OCI-LY7 (cell line): ENCODE measurements at regions of chr19 and their contacts with region 1.

Region 1: GRCh38 chr19:20039203-20039723 is at the start of gene ZNF682:
- DNase-seq: peak; percentile 98
- H3K4me3 ChIP-seq: peak within 1 kb of the TSS; percentile 73
- H3K27ac ChIP-seq: peak within 1 kb of the TSS; percentile 59
- H3K4me1 ChIP-seq: peaks cover 11% of the 10 kb centered on the region
- CTCF ChIP-seq: no peak
- total RNA-seq, gene ZNF682: 9.1 and 10.5 TPM in 2 replicates

Region 2: GRCh38 chr19:19643158-19644053 is 395.9 kb before region 1 on chr19 and contains the start of gene GMIP:
- CTCF ChIA-PET with region 1: no interaction called
- POLR2A ChIA-PET with region 1: no interaction called
- intact Hi-C with region 1: no loop called
- DNase-seq: peak; percentile 85
- H3K4me3 ChIP-seq: peak within 1 kb of the TSS; percentile 78
- H3K27ac ChIP-seq: peak within 1 kb of the TSS; percentile 90
- H3K4me1 ChIP-seq: peaks cover 21% of the 10 kb centered on the region
- CTCF ChIP-seq: peak; percentile 96
- total RNA-seq, gene GMIP: 30.1 and 34.7 TPM in 2 replicates

Region 3: GRCh38 chr19:19774354-19775033 is 264.8 kb before region 1 on chr19:
- CTCF ChIA-PET with region 1: no interaction called
- POLR2A ChIA-PET with region 1: no interaction called
- intact Hi-C with region 1: no loop called
- DNase-seq: peak; percentile 31
- H3K4me3 ChIP-seq: no peak overlapping the region
- H3K27ac ChIP-seq: no peak overlapping the region
- H3K4me1 ChIP-seq: peaks cover 23% of the 10 kb centered on the region
- CTCF ChIP-seq: no peak

Region 4: DNA sequence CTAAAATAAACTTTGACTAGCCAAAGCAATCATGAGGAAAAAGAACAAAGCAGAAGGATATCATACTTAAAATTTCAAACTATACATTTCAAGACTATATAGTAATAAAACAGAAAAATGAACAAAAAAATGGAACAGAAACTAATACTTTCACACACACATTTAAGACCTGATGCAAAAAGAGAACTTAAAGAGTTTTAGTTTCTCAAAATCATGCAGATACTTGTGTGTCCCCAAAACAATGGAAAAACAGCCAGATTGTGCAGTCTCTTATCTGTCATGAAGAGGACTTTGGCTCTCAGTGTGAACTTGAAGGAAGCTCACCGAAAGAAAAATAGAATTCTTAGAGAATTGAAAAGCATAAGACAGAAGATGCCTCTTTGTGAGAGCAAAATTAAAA is 233.8 kb before region 1 on chr19:
- CTCF ChIA-PET with region 1: no interaction called
- POLR2A ChIA-PET with region 1: interaction called, 13 read pairs
- intact Hi-C with region 1: no loop called
- DNase-seq: no peak
- H3K4me3 ChIP-seq: no peak overlapping the region
- H3K27ac ChIP-seq: no peak overlapping the region
- H3K4me1 ChIP-seq: no peaks in the 10 kb centered on the region
- CTCF ChIP-seq: no peak

Region 5: DNA sequence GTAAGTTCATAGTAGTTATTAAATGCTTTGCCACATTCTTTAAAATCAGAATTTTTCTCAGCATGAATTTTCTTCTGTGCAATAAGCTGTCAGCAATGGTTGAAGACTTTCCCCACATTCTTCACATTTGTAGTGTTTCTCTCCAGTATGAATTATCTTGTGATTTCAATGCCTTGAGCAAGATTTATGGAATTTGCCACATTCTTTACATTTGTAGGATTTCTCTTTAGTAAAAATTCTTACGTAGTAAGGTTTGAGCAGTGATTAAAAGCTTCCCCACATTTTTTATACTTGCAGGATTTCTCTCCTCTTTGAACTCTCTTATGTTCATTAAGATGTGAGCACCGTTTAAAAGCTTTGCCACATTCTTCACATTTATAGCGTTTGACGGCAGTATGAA is 33.5 kb before region 1 on chr19:
- CTCF ChIA-PET with region 1: no interaction called
- POLR2A ChIA-PET with region 1: no interaction called
- intact Hi-C with region 1: no loop called
- DNase-seq: no peak
- H3K4me3 ChIP-seq: no peak overlapping the region
- H3K27ac ChIP-seq: no peak overlapping the region
- H3K4me1 ChIP-seq: no peaks in the 10 kb centered on the region
- CTCF ChIP-seq: no peak

Region 6: DNA sequence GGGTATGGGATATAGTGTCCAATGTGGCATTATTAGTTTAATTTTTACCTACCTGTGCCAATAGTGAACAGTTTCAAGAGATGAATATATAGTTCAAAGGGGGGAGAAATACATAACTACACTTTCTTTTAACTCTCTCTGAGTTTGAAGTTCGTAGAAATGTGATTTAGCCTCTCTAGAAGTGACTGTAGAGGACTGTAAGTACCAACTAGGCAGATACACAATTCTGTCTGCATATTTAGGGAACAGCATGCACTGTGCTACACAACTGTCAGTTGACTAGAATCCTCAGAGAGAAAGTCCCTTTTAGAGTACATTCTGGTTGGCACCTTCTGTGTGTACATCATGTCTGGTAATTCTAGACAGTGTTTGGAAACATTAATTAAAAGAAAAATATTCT is 21.0 kb after region 1 on chr19:
- CTCF ChIA-PET with region 1: no interaction called
- POLR2A ChIA-PET with region 1: no interaction called
- intact Hi-C with region 1: no loop called
- DNase-seq: no peak
- H3K4me3 ChIP-seq: no peak overlapping the region
- H3K27ac ChIP-seq: no peak overlapping the region
- H3K4me1 ChIP-seq: no peaks in the 10 kb centered on the region
- CTCF ChIP-seq: no peak

Region 7: GRCh38 chr19:20237761-20238623 is 198.7 kb after region 1 on chr19:
- CTCF ChIA-PET with region 1: no interaction called
- POLR2A ChIA-PET with region 1: interaction called, 10 read pairs
- intact Hi-C with region 1: no loop called
- DNase-seq: peak; percentile 97
- H3K4me3 ChIP-seq: peak overlapping the region; percentile 89
- H3K27ac ChIP-seq: peak overlapping the region; percentile 78
- H3K4me1 ChIP-seq: peaks cover 28% of the 10 kb centered on the region
- CTCF ChIP-seq: peak; percentile 27; the same call in 1 of the 2 replicates